HEK293 (cell line): ENCODE measurements at regions of chr19 and their contacts with region 1.

Region 1: GRCh38 chr19:34879563-34879962 is 47.1 kb upstream of the ZNF30 start:
- H3K4me3 ChIP-seq: no peak overlapping the region
- H3K27ac ChIP-seq: no peak overlapping the region
- H3K4me1 ChIP-seq: no peaks in the 10 kb centered on the region
- CTCF ChIP-seq: no peak

Region 2: GRCh38 chr19:34838753-34839431 is 40.7 kb before region 1 on chr19:
- CTCF ChIA-PET with region 1: interaction called, 10 read pairs
- POLR2A ChIA-PET with region 1: no interaction called
- H3K4me3 ChIP-seq: no peak overlapping the region
- H3K27ac ChIP-seq: no peak overlapping the region
- H3K4me1 ChIP-seq: 0 out of 2 replicates have a peak, but pooled peaks cover 2% of the 10 kb centered on the region
- CTCF ChIP-seq: no peak

Region 3: DNA sequence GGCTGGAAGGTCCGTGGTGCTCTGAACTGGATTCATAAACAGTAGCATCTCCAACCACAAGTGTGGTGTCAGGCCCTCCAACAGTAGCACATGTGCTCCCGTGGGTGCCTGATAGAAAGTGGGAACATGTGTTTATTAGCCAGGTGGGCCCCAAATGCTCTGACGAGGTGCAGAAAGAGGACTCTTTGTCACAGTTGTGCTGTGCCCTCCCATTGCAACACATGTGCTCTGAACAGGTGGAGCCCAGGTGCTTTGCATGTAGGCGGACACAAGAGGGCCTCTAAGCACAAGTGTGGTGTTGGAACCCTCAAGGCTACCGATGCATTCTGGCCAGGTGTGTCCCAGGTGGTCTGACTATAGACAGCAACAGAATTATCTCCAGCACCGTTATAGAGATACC is 28.2 kb before region 1 on chr19:
- CTCF ChIA-PET with region 1: no interaction called
- POLR2A ChIA-PET with region 1: no interaction called
- H3K4me3 ChIP-seq: no peak overlapping the region
- H3K27ac ChIP-seq: no peak overlapping the region
- H3K4me1 ChIP-seq: no peaks in the 10 kb centered on the region
- CTCF ChIP-seq: no peak